Caco-2 (cell line): ENCODE measurements at regions of chr13 and their contacts with region 1.

Region 1: GRCh38 chr13:106100171-106100919 is 435.1 kb downstream of the EFNB2 start:
- DNase-seq: peak; percentile 95 to 98
- H3K4me3 ChIP-seq: peak overlapping the region; percentile 11; the same call in 1 of the 2 replicates
- H3K4me3 Mint-ChIP-seq: peak overlapping the region; percentile 68
- H3K27ac Mint-ChIP-seq: peak overlapping the region; percentile 92
- H3K4me1 ChIP-seq: peaks cover 95% of the 10 kb centered on the region
- H3K4me1 Mint-ChIP-seq: peaks cover 67% of the 10 kb centered on the region
- H3K27me3 ChIP-seq: no peaks in the 10 kb centered on the region
- H3K27me3 Mint-ChIP-seq: no peaks in the 10 kb centered on the region
- CTCF ChIP-seq: no peak

Region 2: GRCh38 chr13:105969761-105970160 is 130.6 kb before region 1 on chr13:
- CTCF ChIA-PET with region 1: no interaction called
- POLR2A ChIA-PET with region 1: no interaction called
- intact Hi-C with region 1: loop called (anchors 1 kb)
- DNase-seq: peak; percentile 74 to 87
- H3K4me3 ChIP-seq: no peak overlapping the region
- H3K4me3 Mint-ChIP-seq: peak overlapping the region; percentile 69
- H3K27ac Mint-ChIP-seq: peak overlapping the region; percentile 76
- H3K4me1 ChIP-seq: peaks cover 51% of the 10 kb centered on the region
- H3K4me1 Mint-ChIP-seq: peaks cover 46% of the 10 kb centered on the region
- H3K27me3 ChIP-seq: no peaks in the 10 kb centered on the region; the same call in 1 of the 2 replicates
- H3K27me3 Mint-ChIP-seq: no peaks in the 10 kb centered on the region
- CTCF ChIP-seq: no peak

Region 3: DNA sequence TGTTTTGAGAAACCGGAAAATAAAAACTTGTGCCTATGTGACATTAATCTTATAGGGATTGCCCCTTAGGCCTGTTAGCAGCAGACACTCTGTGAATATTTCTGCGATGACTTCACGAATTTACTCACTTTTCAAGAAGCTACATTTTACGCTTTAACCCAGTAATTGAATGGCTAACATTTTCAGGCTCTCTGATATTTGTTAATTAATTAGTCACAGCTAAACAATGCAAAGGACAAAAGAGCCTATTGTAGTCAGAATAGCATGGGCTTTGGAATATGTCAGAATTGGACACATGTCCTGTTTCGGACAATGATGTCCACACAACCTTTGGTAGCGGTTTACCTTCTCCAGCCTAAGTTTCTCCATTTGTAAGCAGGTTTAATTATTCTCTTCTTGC is 71.4 kb before region 1 on chr13:
- CTCF ChIA-PET with region 1: no interaction called
- POLR2A ChIA-PET with region 1: no interaction called
- intact Hi-C with region 1: no loop called
- DNase-seq: no peak
- H3K4me3 ChIP-seq: no peak overlapping the region
- H3K4me3 Mint-ChIP-seq: no peak overlapping the region
- H3K27ac Mint-ChIP-seq: no peak overlapping the region
- H3K4me1 ChIP-seq: no peaks in the 10 kb centered on the region
- H3K4me1 Mint-ChIP-seq: peaks cover 7% of the 10 kb centered on the region
- H3K27me3 ChIP-seq: no peaks in the 10 kb centered on the region
- H3K27me3 Mint-ChIP-seq: no peaks in the 10 kb centered on the region
- CTCF ChIP-seq: no peak

Region 4: GRCh38 chr13:106083620-106084350 is 16.6 kb before region 1 on chr13:
- CTCF ChIA-PET with region 1: no interaction called
- POLR2A ChIA-PET with region 1: no interaction called
- intact Hi-C with region 1: loop called (anchors 1 kb)
- DNase-seq: peak; percentile 67 to 69
- H3K4me3 ChIP-seq: no peak overlapping the region
- H3K4me3 Mint-ChIP-seq: no peak overlapping the region
- H3K27ac Mint-ChIP-seq: peak overlapping the region; percentile 25
- H3K4me1 ChIP-seq: peaks cover 24% of the 10 kb centered on the region
- H3K4me1 Mint-ChIP-seq: peaks cover 15% of the 10 kb centered on the region
- H3K27me3 ChIP-seq: no peaks in the 10 kb centered on the region
- H3K27me3 Mint-ChIP-seq: no peaks in the 10 kb centered on the region
- CTCF ChIP-seq: peak; percentile 68 to 71

Region 5: DNA sequence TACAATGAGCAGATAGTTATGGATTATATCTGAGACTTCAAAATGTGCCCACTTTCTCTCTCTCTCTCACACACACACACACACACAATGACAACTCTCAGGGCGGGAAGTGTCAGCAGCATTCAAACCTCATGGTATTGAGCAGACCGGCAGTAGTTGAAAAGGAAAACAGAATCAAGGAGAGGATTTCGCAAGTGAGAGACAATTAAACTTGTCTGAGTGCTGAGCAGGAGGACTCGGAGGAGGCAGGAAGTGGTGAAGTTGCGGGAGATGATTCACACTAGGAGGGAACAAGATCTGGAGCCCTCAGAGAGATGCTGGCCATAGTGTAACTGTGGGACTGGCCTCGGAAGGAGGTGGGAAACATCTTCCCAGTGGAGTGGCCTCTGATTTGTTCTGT is 82.1 kb after region 1 on chr13:
- CTCF ChIA-PET with region 1: no interaction called
- POLR2A ChIA-PET with region 1: no interaction called
- intact Hi-C with region 1: loop called (anchors 1 kb)
- DNase-seq: no peak
- H3K4me3 ChIP-seq: no peak overlapping the region
- H3K4me3 Mint-ChIP-seq: no peak overlapping the region
- H3K27ac Mint-ChIP-seq: peak overlapping the region; percentile 30
- H3K4me1 ChIP-seq: peaks cover 35% of the 10 kb centered on the region
- H3K4me1 Mint-ChIP-seq: peaks cover 42% of the 10 kb centered on the region
- H3K27me3 ChIP-seq: no peaks in the 10 kb centered on the region
- H3K27me3 Mint-ChIP-seq: no peaks in the 10 kb centered on the region
- CTCF ChIP-seq: no peak

Region 6: DNA sequence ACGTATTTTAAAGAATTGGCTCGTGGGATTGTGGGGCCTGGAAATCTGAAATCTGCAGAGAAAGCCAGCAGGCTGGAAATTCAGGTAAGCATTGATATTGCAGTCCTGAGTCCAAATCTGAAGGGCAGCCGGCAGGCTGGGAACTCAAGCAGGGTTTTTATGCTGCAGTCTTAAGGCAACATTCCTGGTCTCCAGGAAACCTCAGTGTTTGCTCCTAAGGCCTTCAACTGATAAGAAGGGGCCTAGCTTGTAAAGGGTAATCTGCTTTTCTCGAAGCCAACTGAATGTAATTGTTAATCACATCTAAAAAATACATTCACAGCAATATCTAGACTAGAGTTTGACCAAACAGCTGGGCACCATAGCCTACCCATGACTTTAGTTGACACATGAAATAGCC is 280.7 kb after region 1 on chr13:
- CTCF ChIA-PET with region 1: no interaction called
- POLR2A ChIA-PET with region 1: no interaction called
- intact Hi-C with region 1: loop called (anchors 5 kb)
- DNase-seq: peak; percentile 76 to 82
- H3K4me3 ChIP-seq: no peak overlapping the region
- H3K4me3 Mint-ChIP-seq: peak overlapping the region; percentile 26
- H3K27ac Mint-ChIP-seq: peak overlapping the region; percentile 47
- H3K4me1 ChIP-seq: peaks cover 37% of the 10 kb centered on the region
- H3K4me1 Mint-ChIP-seq: peaks cover 30% of the 10 kb centered on the region
- H3K27me3 ChIP-seq: no peaks in the 10 kb centered on the region
- H3K27me3 Mint-ChIP-seq: no peaks in the 10 kb centered on the region
- CTCF ChIP-seq: no peak

Region 7: DNA sequence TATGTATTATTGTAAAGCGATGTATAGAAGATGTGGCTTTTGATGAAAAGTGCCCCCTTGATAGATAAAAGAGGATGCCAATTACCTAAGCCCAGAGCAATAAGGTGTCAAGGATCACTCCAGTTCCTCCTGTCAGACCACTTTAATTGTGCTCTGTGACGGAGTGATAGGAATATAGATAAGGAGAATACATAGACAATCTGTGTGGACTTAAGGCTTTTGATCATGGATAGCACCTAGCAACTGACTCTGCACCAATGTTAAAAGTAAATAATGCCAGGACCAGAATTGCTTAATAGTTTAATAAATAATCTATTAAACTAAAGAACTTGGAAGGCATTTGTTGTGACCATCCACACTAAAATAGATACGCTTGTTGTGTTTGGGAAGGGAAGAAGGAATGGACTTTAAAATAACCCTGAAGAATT is 858.3 kb after region 1 on chr13:
- CTCF ChIA-PET with region 1: no interaction called
- POLR2A ChIA-PET with region 1: no interaction called
- intact Hi-C with region 1: loop called (anchors 1 kb)
- DNase-seq: peak; percentile 69 to 82
- H3K4me3 ChIP-seq: no peak overlapping the region
- H3K4me3 Mint-ChIP-seq: peak overlapping the region; percentile 65
- H3K27ac Mint-ChIP-seq: peak overlapping the region; percentile 92
- H3K4me1 ChIP-seq: peaks cover 69% of the 10 kb centered on the region
- H3K4me1 Mint-ChIP-seq: peaks cover 50% of the 10 kb centered on the region
- H3K27me3 ChIP-seq: no peaks in the 10 kb centered on the region
- H3K27me3 Mint-ChIP-seq: no peaks in the 10 kb centered on the region
- CTCF ChIP-seq: no peak